GM12878 (cell line): ENCODE measurements at regions of chr5 and their contacts with region 1.

Region 1: GRCh38 chr5:102778478-102778877 is 23.4 kb downstream of the PAM start:
- DNase-seq: no peak
- ATAC-seq: peak; percentile 67
- H3K4me3 ChIP-seq: no peak overlapping the region
- H3K27ac ChIP-seq: no peak overlapping the region
- H3K4me1 ChIP-seq: 0 out of 2 replicates have a peak, but pooled peaks cover 5% of the 10 kb centered on the region
- H3K27me3 ChIP-seq: no peaks in the 10 kb centered on the region
- CTCF ChIP-seq: no peak
- EP300 ChIP-seq: no peak
- POLR2A ChIP-seq: no peak
- RAD21 ChIP-seq: no peak

Region 2: DNA sequence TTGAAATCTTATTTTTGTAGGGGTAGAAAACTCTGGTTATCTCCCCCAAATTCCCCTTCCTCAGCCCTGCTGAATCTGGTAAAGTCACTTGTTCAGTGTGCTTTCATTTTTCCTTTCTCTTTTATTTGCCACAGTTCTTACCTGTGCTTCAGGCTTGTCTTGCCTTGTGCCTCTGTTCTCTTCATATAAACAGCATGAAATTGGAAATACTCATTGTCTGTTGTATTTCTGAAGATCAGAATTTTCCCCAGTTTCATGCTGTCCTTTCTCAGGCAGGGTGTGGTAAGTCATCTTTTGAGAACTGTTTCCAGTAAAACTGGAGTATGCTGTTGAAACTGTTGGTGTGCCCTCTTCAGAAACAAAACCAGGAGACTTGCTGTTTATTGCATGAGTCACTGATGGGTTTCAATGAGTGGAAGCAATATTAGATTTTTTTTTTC is 16.4 kb before region 1 on chr5:
- CTCF ChIA-PET with region 1: interaction called, 29 read pairs
- POLR2A ChIA-PET with region 1: interaction called, 4 read pairs
- RAD21 ChIA-PET with region 1: interaction called, 9 read pairs
- SMC1A ChIA-PET with region 1: interaction called, 9 read pairs
- in situ Hi-C with region 1: no loop called
- intact Hi-C with region 1: no loop called
- DNase-seq: no peak
- ATAC-seq: peak; percentile 83
- H3K4me3 ChIP-seq: peak overlapping the region; percentile 70
- H3K27ac ChIP-seq: peak overlapping the region; percentile 79
- H3K4me1 ChIP-seq: peaks cover 6% of the 10 kb centered on the region; the same call in 1 of the 2 replicates
- H3K27me3 ChIP-seq: no peaks in the 10 kb centered on the region
- CTCF ChIP-seq: no peak
- EP300 ChIP-seq: no peak
- POLR2A ChIP-seq: no peak
- RAD21 ChIP-seq: no peak

Region 3: DNA sequence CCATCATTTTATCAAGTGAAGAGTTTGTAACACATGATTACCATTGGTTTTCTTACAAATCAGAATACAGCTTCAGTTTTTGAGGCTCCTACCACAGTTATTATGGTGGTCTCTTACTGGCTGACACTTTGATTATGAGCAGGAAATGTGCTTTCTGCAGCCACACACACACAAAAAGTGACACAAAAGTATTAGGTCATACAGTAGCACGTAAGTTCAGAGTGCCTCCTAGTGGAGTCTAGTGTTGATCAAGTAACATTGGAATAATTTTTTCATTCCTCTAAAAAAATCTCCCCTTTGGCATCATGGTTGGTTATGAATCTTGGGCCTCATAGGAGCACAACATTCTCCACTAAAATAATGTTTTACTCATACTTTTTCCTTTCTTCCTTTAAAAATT is 14.2 kb after region 1 on chr5:
- CTCF ChIA-PET with region 1: interaction called, 21 read pairs
- POLR2A ChIA-PET with region 1: no interaction called
- RAD21 ChIA-PET with region 1: interaction called, 3 read pairs
- SMC1A ChIA-PET with region 1: interaction called, 5 read pairs
- in situ Hi-C with region 1: no loop called
- intact Hi-C with region 1: no loop called
- DNase-seq: no peak
- ATAC-seq: peak; percentile 55
- H3K4me3 ChIP-seq: no peak overlapping the region
- H3K27ac ChIP-seq: no peak overlapping the region
- H3K4me1 ChIP-seq: no peaks in the 10 kb centered on the region
- H3K27me3 ChIP-seq: no peaks in the 10 kb centered on the region
- CTCF ChIP-seq: peak in 2 of 3 experiments; percentile 18 to 32; a peak in 2 of 6 replicates
- EP300 ChIP-seq: no peak
- POLR2A ChIP-seq: no peak
- RAD21 ChIP-seq: peak; percentile 31; the same call in 1 of the 2 replicates

Region 4: GRCh38 chr5:102865510-102866236 is 87.2 kb after region 1 on chr5:
- CTCF ChIA-PET with region 1: interaction called, 15 read pairs
- POLR2A ChIA-PET with region 1: no interaction called
- RAD21 ChIA-PET with region 1: interaction called, 4 read pairs
- SMC1A ChIA-PET with region 1: interaction called, 4 read pairs
- in situ Hi-C with region 1: no loop called
- intact Hi-C with region 1: no loop called
- DNase-seq: peak; percentile 9
- ATAC-seq: peak; percentile 93
- H3K4me3 ChIP-seq: peak overlapping the region; percentile 64
- H3K27ac ChIP-seq: peak overlapping the region; percentile 27; the same call in 1 of the 2 replicates
- H3K4me1 ChIP-seq: peaks cover 5% of the 10 kb centered on the region; the same call in 1 of the 2 replicates
- H3K27me3 ChIP-seq: no peaks in the 10 kb centered on the region
- CTCF ChIP-seq: no peak
- EP300 ChIP-seq: peak in 1 of 2 experiments; percentile 32; a peak in 1 of 4 replicates
- POLR2A ChIP-seq: peak; percentile 65
- RAD21 ChIP-seq: no peak

Region 5: DNA sequence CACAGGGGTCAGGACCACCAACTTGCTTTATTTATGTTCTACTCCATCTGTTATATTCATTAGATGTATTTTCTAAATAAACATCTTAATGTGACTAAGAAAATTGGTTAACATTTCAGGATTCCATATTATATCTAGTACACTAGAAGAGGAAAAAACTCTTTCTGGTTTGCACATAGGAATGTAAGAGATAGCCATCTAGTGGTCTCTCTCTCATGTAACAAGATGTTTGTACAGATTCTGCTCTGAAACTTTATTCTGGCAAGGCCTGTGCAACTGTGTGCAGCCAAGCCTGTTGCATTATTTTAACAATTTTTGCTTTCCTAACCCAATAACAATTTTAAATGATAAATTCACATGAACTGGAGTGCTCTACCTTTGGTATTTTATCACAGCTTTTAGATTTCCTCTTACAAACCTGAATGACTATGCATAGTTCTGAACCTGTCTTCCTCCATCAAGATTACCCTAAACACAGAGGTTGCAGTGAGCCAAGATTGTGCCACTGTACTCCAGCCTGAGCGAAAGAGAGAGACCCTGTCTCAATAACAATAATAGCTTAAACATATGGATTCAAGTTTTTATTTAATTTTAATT is 193.3 kb after region 1 on chr5:
- CTCF ChIA-PET with region 1: interaction called, 42 read pairs
- POLR2A ChIA-PET with region 1: no interaction called
- RAD21 ChIA-PET with region 1: interaction called, 19 read pairs
- SMC1A ChIA-PET with region 1: interaction called, 23 read pairs
- in situ Hi-C with region 1: no loop called
- intact Hi-C with region 1: loop called (anchors 5 kb)
- DNase-seq: no peak
- ATAC-seq: peak; percentile 63
- H3K4me3 ChIP-seq: no peak overlapping the region
- H3K27ac ChIP-seq: no peak overlapping the region
- H3K4me1 ChIP-seq: no peaks in the 10 kb centered on the region
- H3K27me3 ChIP-seq: no peaks in the 10 kb centered on the region
- CTCF ChIP-seq: peak; percentile 34 to 50 (median 43); a peak in 4 of 6 replicates
- EP300 ChIP-seq: no peak
- POLR2A ChIP-seq: no peak
- RAD21 ChIP-seq: peak; percentile 53

Region 6: DNA sequence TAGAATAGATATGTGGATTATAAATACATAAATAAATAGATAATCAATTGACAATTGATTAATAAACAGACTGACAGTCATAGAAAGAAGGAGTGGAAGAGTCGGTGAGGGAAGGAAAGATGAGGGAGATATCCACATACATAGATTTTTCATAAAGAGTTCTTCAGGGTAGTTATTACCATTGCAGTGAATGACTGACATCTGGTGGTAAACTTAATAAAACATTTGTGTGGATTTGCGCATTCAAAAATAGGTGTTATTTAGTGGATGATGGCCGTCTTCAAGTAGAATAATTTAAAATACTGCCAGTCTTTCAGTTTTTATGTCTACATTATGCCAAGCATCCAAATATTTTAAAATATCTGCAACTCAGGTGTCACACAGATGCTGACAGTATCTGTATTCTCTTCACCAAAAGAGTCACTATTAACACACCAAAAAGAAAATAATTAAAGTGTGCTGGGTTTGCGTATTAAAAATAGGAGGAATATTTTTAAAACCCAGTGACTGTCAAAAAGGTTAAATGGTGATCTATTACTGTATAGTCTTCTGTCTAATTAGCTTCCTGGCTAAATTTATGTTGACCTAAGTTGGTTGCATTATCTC is 262.7 kb after region 1 on chr5:
- CTCF ChIA-PET with region 1: interaction called, 19 read pairs
- POLR2A ChIA-PET with region 1: no interaction called
- RAD21 ChIA-PET with region 1: interaction called, 6 read pairs
- SMC1A ChIA-PET with region 1: interaction called, 11 read pairs
- in situ Hi-C with region 1: no loop called
- intact Hi-C with region 1: loop called (anchors 2 kb)
- DNase-seq: no peak
- ATAC-seq: peak; percentile 68
- H3K4me3 ChIP-seq: no peak overlapping the region
- H3K27ac ChIP-seq: no peak overlapping the region
- H3K4me1 ChIP-seq: no peaks in the 10 kb centered on the region
- H3K27me3 ChIP-seq: no peaks in the 10 kb centered on the region
- CTCF ChIP-seq: peak; percentile 16 to 58 (median 28); a peak in 4 of 6 replicates
- EP300 ChIP-seq: no peak
- POLR2A ChIP-seq: no peak
- RAD21 ChIP-seq: peak; percentile 79

Region 7: GRCh38 chr5:103139264-103139865 is 360.9 kb after region 1 on chr5:
- CTCF ChIA-PET with region 1: interaction called, 24 read pairs
- POLR2A ChIA-PET with region 1: no interaction called
- RAD21 ChIA-PET with region 1: interaction called, 24 read pairs
- SMC1A ChIA-PET with region 1: interaction called, 14 read pairs
- in situ Hi-C with region 1: loop called (anchors 10 kb)
- intact Hi-C with region 1: loop called (anchors 1 kb)
- DNase-seq: peak; percentile 30
- ATAC-seq: peak; percentile 100
- H3K4me3 ChIP-seq: no peak overlapping the region
- H3K27ac ChIP-seq: no peak overlapping the region
- H3K4me1 ChIP-seq: no peaks in the 10 kb centered on the region
- H3K27me3 ChIP-seq: no peaks in the 10 kb centered on the region
- CTCF ChIP-seq: peak; percentile 83 to 96 (median 94); a peak in 5 of 6 replicates
- EP300 ChIP-seq: no peak
- POLR2A ChIP-seq: no peak
- RAD21 ChIP-seq: peak; percentile 98